ENCODE measurements at regions of chr18 and their contacts with region 1.

Region 1: GRCh38 chr18:47247036-47247832 is 4.2 kb downstream of the SKOR2 start:
- DNase-seq: peak; percentile 62
- H3K4me3 Mint-ChIP-seq: no peak overlapping the region
- H3K27ac Mint-ChIP-seq: no peak overlapping the region
- H3K4me1 Mint-ChIP-seq: peaks cover 3% of the 10 kb centered on the region
- H3K27me3 Mint-ChIP-seq: peaks cover 71% of the 10 kb centered on the region

Region 2: DNA sequence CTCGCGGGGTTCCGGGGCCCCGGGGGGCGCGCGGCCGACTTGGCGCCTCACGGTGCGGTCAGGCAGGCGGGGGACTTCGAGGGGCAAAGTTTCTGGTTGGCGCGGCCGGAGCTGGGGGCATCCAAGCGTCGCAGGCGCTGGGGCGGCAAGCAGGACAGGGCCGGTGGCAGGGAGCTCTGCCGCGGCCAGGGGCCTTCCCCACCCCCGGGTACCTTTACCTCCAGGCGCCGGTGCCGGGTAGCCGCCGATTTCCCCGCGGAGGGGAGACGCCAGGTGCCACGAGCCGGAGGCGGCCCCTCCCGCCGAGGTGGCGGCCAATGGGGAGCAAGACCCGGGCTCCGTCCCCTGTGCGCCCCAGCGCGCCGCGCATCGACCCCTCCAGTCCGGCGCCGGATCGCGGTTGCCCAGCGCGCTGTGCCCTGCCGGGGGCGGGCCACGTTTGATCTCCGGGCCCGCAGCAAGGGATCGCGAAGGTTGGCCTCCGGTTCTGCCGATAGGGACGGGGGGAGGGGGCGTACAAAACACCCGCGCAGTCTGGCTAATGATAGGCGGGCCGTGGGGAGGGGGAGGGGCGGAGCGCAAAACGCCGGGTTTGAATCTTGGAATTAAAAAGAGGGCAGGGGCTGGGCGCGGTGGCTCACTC is 490.6 kb before region 1 on chr18 and contains the start of gene ST8SIA5:
- intact Hi-C with region 1: loop called (anchors 10 kb)
- DNase-seq: no peak
- H3K4me3 Mint-ChIP-seq: peak within 1 kb of the TSS; percentile 73
- H3K27ac Mint-ChIP-seq: no peak within 1 kb of the TSS
- H3K4me1 Mint-ChIP-seq: peaks cover 9% of the 10 kb centered on the region
- H3K27me3 Mint-ChIP-seq: peaks cover 66% of the 10 kb centered on the region
- total RNA-seq, gene ST8SIA5: not detected in 2 replicates

Region 3: GRCh38 chr18:47263430-47264307 is 16.4 kb after region 1 on chr18:
- intact Hi-C with region 1: loop called (anchors 2 kb)
- DNase-seq: no peak
- H3K4me3 Mint-ChIP-seq: no peak overlapping the region
- H3K27ac Mint-ChIP-seq: no peak overlapping the region
- H3K4me1 Mint-ChIP-seq: no peaks in the 10 kb centered on the region
- H3K27me3 Mint-ChIP-seq: peaks cover 66% of the 10 kb centered on the region

Measured in activated CD4-positive, alpha-beta T cell treated with anti-CD3 and anti-CD28 coated beads, Interleukin-2, amount 10 ng/mL, durations not matched to agents 24 days and 14 days (primary cell).